Gastrocnemius medialis (tissue), 4 donors: ENCODE measurements at regions of chr21 and their contacts with region 1.

Region 1: DNA sequence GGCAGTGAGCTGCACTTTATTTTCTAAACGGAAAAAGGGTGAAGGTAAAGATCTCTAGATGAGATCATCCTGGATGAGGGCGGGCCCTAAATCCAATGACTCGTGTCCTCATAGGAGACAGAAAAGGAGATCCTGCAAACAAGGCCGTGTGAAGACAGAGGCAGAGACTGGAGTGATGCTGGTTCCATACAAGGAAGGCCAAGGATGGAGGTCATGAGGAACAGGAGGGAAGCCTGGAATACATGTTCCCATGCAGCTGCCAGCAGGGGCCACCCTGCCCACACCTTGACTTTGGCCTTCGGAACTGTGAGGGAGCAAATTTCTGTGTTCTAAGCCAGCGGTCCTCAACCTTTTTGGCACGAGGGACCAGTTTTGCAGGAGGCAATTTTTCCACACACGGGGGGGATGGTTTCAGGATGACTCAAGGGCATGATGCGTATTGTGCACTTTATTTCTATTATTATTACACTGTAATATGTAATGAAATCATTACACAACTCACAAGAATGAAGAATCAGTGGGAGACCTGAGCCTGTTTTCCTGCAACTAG is 94.3 kb downstream of the PSMG1 start:
- DNase-seq: peak in 1 of 2 donors; percentile 53
- ATAC-seq: no peak
- H3K4me3 ChIP-seq: no peak overlapping the region
- H3K27ac ChIP-seq: peak overlapping the region; percentile 95 to 100 (median 97)
- H3K4me1 ChIP-seq: peaks cover 22 to 24% of the 10 kb centered on the region in 2 donors
- H3K27me3 ChIP-seq: no peaks in the 10 kb centered on the region
- CTCF ChIP-seq: peak in 1 of 5 experiments; percentile 33
- POLR2A ChIP-seq: no peak

Region 2: DNA sequence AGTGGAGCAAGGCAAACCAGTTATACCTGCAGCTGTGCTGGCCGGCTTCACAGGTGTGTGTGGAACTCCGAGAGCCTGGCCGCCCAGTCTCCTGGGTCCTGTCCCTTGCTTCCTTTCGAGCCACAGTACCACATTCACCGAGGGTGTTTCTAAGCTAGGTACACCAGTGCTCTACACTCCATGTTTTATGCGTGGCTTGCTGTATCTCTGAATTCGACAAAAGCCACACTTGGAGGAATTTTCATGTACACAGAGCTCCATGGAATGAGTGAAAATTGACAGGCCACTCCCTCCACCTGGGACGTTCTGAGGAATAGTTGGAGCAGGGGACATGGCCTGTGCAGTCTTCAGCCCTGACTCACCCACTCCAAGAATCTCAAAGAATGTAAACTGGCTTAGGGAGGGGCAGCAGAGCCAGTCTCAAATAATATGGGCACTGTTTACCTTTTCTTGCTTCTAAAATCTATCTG is 269.2 kb before region 1 on chr21:
- in situ Hi-C with region 1: no loop called
- intact Hi-C with region 1: loop called (anchors 5 kb)
- DNase-seq: no peak
- ATAC-seq: no peak
- H3K4me3 ChIP-seq: no peak overlapping the region
- H3K27ac ChIP-seq: peak overlapping the region; percentile 77 to 88 (median 83)
- H3K4me1 ChIP-seq: peaks cover 27 to 32% of the 10 kb centered on the region in 2 donors
- H3K27me3 ChIP-seq: no peaks in the 10 kb centered on the region
- CTCF ChIP-seq: no peak
- POLR2A ChIP-seq: no peak

Region 3: GRCh38 chr21:38853421-38853919 is 235.4 kb before region 1 on chr21:
- in situ Hi-C with region 1: no loop called
- intact Hi-C with region 1: loop called (anchors 2 kb)
- DNase-seq: peak; percentile 96 to 99
- ATAC-seq: peak; percentile 87 to 88
- H3K4me3 ChIP-seq: no peak overlapping the region
- H3K27ac ChIP-seq: peak overlapping the region; percentile 86 to 88 (median 86)
- H3K4me1 ChIP-seq: peaks cover 22 to 43% of the 10 kb centered on the region in 2 donors
- H3K27me3 ChIP-seq: no peaks in the 10 kb centered on the region
- CTCF ChIP-seq: no peak
- POLR2A ChIP-seq: peak in 1 of 2 donors; percentile 19

Region 4: GRCh38 chr21:38913120-38913892 is 175.6 kb before region 1 on chr21:
- in situ Hi-C with region 1: no loop called
- intact Hi-C with region 1: loop called (anchors 5 kb)
- DNase-seq: peak; percentile 52 to 83
- ATAC-seq: peak; percentile 54 to 81
- H3K4me3 ChIP-seq: peak overlapping the region; percentile 28 to 45 (median 30)
- H3K27ac ChIP-seq: peak overlapping the region; percentile 88 to 95 (median 92)
- H3K4me1 ChIP-seq: peaks cover 38 to 55% of the 10 kb centered on the region in 2 donors
- H3K27me3 ChIP-seq: no peaks in the 10 kb centered on the region
- CTCF ChIP-seq: no peak
- POLR2A ChIP-seq: peak; percentile 19 to 28

Region 5: GRCh38 chr21:38984982-38985567 is 103.8 kb before region 1 on chr21:
- in situ Hi-C with region 1: no loop called
- intact Hi-C with region 1: no loop called
- DNase-seq: no peak
- ATAC-seq: no peak
- H3K4me3 ChIP-seq: no peak overlapping the region
- H3K27ac ChIP-seq: peak overlapping the region; percentile 39 to 70 (median 66)
- H3K4me1 ChIP-seq: peaks cover 61 to 63% of the 10 kb centered on the region in 2 donors
- H3K27me3 ChIP-seq: no peaks in the 10 kb centered on the region
- CTCF ChIP-seq: no peak
- POLR2A ChIP-seq: no peak

Region 6: DNA sequence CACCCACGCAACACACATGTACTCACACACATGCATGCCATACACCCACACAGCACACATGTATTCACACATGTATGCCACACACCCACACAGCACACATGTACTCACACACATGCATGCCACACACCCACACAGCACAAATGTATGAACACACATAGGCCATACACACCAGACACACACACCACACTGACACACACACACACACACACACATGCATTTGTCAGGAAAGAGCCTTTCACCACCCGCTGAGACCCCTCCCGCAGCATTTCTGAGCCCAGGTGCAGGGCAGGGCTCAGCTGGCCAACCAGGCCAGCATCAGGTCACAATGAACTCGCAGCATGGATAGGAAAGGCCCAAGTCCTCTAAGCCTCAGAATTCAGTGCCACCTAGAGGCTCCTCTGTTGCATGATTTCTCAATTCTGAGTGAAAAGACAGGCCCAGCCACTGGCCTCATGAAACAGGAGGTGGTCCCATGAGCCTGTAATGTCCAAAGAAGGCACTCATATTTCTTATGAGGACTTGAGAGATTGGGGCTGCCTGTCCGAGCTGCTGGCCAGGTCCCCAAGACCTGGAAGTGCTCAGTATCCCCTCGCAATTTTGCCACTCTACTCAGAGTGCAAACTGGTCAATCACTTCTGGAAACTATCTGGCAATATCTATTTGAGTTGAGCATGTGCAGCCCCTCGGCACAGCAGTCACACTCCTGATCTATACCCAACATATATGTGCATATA is 37.0 kb after region 1 on chr21:
- in situ Hi-C with region 1: no loop called
- intact Hi-C with region 1: loop called (anchors 2 kb)
- DNase-seq: peak in 1 of 2 donors; percentile 46
- ATAC-seq: peak; percentile 91 to 99
- H3K4me3 ChIP-seq: no peak overlapping the region
- H3K27ac ChIP-seq: peak overlapping the region in 2 of 4 donors; percentile 9 to 39
- H3K4me1 ChIP-seq: peaks cover 6 to 9% of the 10 kb centered on the region in 2 donors
- H3K27me3 ChIP-seq: no peaks in the 10 kb centered on the region
- CTCF ChIP-seq: peak; percentile 54 to 67 (median 65)
- POLR2A ChIP-seq: no peak

Region 7: DNA sequence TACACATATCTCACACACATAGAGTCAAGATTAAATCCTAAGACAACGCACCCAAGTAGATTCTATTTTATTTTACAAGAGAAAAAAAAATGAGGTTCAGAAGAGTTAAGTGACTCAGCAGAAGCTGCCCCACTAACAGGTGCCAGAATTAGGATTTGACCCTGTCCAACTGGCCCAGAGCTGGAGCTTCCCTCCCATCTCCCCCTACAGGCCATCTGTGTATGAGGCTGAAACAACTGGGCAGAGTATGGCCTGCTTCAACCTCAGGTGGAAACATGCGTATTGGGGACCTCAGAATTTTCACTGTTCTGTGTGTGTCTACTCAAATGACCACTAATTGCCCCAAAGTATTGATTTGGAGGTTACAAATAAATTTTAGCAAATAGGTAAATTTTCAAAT is 64.5 kb after region 1 on chr21:
- in situ Hi-C with region 1: no loop called
- intact Hi-C with region 1: no loop called
- DNase-seq: peak in 1 of 2 donors; percentile 34
- ATAC-seq: peak in 1 of 2 donors; percentile 91
- H3K4me3 ChIP-seq: no peak overlapping the region
- H3K27ac ChIP-seq: no peak overlapping the region
- H3K4me1 ChIP-seq: peaks cover 0 to 5% of the 10 kb centered on the region in 2 donors
- H3K27me3 ChIP-seq: no peaks in the 10 kb centered on the region
- CTCF ChIP-seq: peak in 2 of 5 experiments; percentile 12 to 42
- POLR2A ChIP-seq: no peak

Region 8: GRCh38 chr21:39451332-39452206 is 362.7 kb after region 1 on chr21 and contains the start of gene SH3BGR:
- in situ Hi-C with region 1: no loop called
- intact Hi-C with region 1: loop called (anchors 5 kb)
- DNase-seq: peak; percentile 90 to 94
- ATAC-seq: peak; percentile 88
- H3K4me3 ChIP-seq: peak within 1 kb of the TSS; percentile 57 to 68 (median 64)
- H3K27ac ChIP-seq: peak within 1 kb of the TSS; percentile 88 to 95 (median 90)
- H3K4me1 ChIP-seq: peaks cover 28 to 43% of the 10 kb centered on the region in 2 donors
- H3K27me3 ChIP-seq: no peaks in the 10 kb centered on the region
- CTCF ChIP-seq: no peak
- POLR2A ChIP-seq: peak; percentile 72 to 90
- total RNA-seq, gene SH3BGR: 92.9 to 182 (median 149) TPM